ENCODE measurements at regions of chr7 and their contacts with region 1.

Region 1: DNA sequence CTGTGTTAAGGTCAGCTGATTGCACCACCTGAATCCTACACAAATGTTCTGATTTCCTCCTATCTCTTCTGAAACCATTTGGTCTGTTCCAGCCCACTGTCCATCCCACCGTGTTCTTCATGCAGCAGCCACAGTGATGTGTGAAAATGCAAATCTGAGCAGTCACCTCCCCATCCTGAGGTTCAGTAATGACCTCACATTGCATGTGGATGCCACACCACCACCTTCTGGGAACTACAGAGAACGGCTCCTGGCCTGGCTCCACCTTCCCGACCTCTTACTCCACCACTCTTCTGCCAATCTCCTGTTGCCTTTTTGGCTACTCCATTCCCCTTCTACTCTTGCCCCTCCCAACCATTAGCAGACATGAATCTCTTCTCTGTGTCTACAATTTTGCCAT is 244.4 kb downstream of the TNS3 start:
- DNase-seq: no peak
- H3K4me3 ChIP-seq: no peak overlapping the region
- H3K27ac ChIP-seq: no peak overlapping the region
- H3K4me1 ChIP-seq: peaks cover 27% of the 10 kb centered on the region
- H3K27me3 ChIP-seq: no peaks in the 10 kb centered on the region
- CTCF ChIP-seq: peak; percentile 5 to 40

Region 2: GRCh38 chr7:47361746-47362215 is 24.2 kb after region 1 on chr7:
- CTCF ChIA-PET with region 1: no interaction called
- dilution Hi-C with region 1: no loop called
- in situ Hi-C with region 1: no loop called
- intact Hi-C with region 1: loop called (anchors 1 kb)
- DNase-seq: peak; percentile 96
- H3K4me3 ChIP-seq: no peak overlapping the region
- H3K27ac ChIP-seq: peak overlapping the region; percentile 31
- H3K4me1 ChIP-seq: peaks cover 20% of the 10 kb centered on the region
- H3K27me3 ChIP-seq: no peaks in the 10 kb centered on the region
- CTCF ChIP-seq: no peak

Region 3: GRCh38 chr7:48058990-48059389 is 721.5 kb after region 1 on chr7:
- CTCF ChIA-PET with region 1: no interaction called
- dilution Hi-C with region 1: no loop called
- in situ Hi-C with region 1: no loop called
- intact Hi-C with region 1: no loop called
- DNase-seq: no peak
- H3K4me3 ChIP-seq: no peak overlapping the region
- H3K27ac ChIP-seq: no peak overlapping the region
- H3K4me1 ChIP-seq: no peaks in the 10 kb centered on the region
- H3K27me3 ChIP-seq: no peaks in the 10 kb centered on the region
- CTCF ChIP-seq: no peak

Measured in mammary epithelial cell (primary cell).